ENCODE measurements at regions of chr4 and their contacts with region 1.

Region 1: DNA sequence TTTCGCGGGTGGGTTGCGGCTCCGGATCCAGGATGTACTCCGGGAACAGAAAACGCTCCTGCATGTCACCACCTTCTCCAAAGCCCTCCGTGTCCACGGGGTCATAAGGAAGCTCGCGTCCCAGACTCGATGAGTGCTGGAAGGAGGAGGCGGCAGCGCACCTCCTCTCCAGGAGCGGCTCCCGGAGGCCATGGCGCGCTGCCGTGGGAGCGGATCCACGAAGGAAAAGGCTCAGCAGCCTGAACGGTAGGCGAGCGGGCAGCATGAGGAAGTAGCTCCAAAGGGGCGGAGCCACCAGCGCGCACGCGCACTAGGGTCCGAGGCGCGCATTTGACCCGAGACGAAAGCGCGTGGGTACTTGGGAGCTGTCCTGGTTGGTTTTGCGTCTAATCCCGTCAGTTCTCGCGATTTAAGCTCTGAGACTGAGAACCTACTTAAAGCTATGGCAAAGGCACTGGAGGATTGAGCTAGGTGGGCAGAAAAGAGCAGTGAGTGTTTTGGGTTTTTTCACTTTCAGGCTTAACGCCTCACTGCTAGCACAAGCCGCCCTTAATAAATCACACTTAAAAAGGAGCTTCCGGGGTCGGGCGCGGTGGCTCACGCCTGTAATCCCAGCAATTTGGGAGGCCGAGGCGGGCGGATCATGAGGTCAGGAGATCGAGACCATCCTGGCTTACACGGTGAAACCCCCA is at the start of gene NOA1:
- DNase-seq: peak; percentile 95 to 99 (median 97)
- ATAC-seq: peak; percentile 79
- H3K4me3 ChIP-seq: peak within 1 kb of the TSS; percentile 94 to 100
- H3K4me3 Mint-ChIP-seq: peak within 1 kb of the TSS; percentile 93
- H3K27ac ChIP-seq: peak within 1 kb of the TSS; percentile 78 to 84
- H3K27ac Mint-ChIP-seq: peak within 1 kb of the TSS; percentile 94
- H3K4me1 ChIP-seq: peaks cover 45% of the 10 kb centered on the region
- H3K4me1 Mint-ChIP-seq: peaks cover 56% of the 10 kb centered on the region
- H3K27me3 ChIP-seq: no peaks in the 10 kb centered on the region
- H3K27me3 Mint-ChIP-seq: no peaks in the 10 kb centered on the region
- CTCF ChIP-seq: no peak
- total RNA-seq, gene NOA1: 16.5 to 17.2 TPM

Region 2: DNA sequence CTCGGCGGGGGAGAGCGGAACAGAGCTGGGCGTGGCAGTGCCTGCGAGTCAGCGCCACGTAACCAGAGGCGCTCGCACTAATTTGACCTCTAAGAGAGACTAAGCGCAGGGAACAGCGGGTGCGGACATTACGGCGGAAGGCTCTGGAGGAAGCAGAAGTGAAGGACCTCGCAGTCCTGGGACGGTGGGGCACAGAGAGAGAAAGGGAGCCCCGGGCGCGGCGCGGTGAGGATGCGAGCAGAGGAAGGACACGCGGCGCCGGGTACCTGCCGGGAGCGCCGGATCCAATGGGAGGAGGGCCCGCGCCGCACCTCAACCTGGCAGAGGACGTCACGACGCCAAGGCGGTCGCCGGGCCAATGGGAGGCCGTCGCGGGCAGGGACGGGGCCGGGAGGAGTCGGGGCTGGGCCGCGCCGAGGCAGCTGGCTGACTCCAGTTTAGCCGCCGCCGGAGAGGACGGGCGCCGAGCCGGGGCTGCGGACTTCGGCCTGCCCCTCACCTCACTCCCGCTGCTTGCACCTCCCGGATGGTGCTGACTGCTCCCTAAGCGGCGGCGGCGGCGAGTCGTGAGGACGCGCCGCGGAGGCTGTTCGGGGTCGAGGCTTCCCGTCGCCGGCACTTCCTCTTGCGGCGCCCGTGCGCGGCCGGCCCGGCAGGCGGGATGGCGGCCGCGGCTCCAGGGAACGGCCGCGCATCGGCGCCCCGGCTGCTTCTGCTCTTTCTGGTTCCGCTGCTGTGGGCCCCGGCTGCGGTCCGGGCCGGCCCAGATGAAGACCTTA is 1581.7 kb before region 1 on chr4 and contains the start of gene TMEM165:
- CTCF ChIA-PET with region 1: no interaction called
- POLR2A ChIA-PET with region 1: no interaction called
- intact Hi-C with region 1: loop called (anchors 2 to 10 kb)
- DNase-seq: peak; percentile 72 to 93 (median 86)
- ATAC-seq: peak; percentile 94
- H3K4me3 ChIP-seq: peak within 1 kb of the TSS; percentile 68 to 74
- H3K4me3 Mint-ChIP-seq: peak within 1 kb of the TSS; percentile 97
- H3K27ac ChIP-seq: peak within 1 kb of the TSS; percentile 83 to 93
- H3K27ac Mint-ChIP-seq: peak within 1 kb of the TSS; percentile 98
- H3K4me1 ChIP-seq: peaks cover 36% of the 10 kb centered on the region
- H3K4me1 Mint-ChIP-seq: peaks cover 38% of the 10 kb centered on the region
- H3K27me3 ChIP-seq: no peaks in the 10 kb centered on the region
- H3K27me3 Mint-ChIP-seq: no peaks in the 10 kb centered on the region
- CTCF ChIP-seq: peak; percentile 0
- total RNA-seq, gene TMEM165: 31.0 to 31.5 TPM

Region 3: DNA sequence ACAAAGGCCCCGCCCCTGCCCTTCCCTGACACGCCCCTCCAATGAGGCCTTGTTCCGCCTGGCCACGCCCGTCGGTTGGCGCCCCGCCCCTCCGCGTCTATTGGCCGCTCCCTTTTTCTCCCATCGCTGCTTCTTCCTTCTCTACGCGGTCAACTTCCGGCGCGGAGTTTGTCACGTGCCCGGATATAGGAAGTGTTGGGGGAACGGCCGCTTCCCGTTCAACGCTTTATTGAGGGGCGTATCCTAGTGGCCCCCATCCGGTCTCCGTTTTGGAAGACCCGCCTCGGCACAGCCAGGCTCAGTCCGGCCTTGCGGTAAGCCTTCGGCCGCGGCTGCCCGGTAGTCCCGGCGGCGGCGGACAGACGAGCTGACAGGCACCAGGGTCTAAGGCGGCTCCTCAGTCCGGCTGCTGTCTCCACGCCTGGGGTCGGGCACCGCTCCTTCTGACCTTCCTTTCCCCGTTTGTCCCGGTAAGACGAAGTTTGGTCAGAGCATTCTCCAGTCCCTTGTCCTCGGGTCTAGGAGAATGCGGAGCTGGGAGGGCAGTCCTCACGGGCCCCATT is 1123.9 kb before region 1 on chr4 and contains the start of gene EXOC1:
- CTCF ChIA-PET with region 1: no interaction called
- POLR2A ChIA-PET with region 1: no interaction called
- intact Hi-C with region 1: loop called in 1 of 2 experiments (anchors 5 kb)
- DNase-seq: peak; percentile 90 to 98 (median 97)
- ATAC-seq: peak; percentile 96
- H3K4me3 ChIP-seq: peak within 1 kb of the TSS; percentile 96
- H3K4me3 Mint-ChIP-seq: peak within 1 kb of the TSS; percentile 36
- H3K27ac ChIP-seq: peak within 1 kb of the TSS; percentile 70 to 86
- H3K27ac Mint-ChIP-seq: peak within 1 kb of the TSS; percentile 64
- H3K4me1 ChIP-seq: peaks cover 40% of the 10 kb centered on the region
- H3K4me1 Mint-ChIP-seq: peaks cover 38% of the 10 kb centered on the region
- H3K27me3 ChIP-seq: no peaks in the 10 kb centered on the region
- H3K27me3 Mint-ChIP-seq: no peaks in the 10 kb centered on the region
- CTCF ChIP-seq: no peak
- total RNA-seq, gene EXOC1: 12.1 to 14.5 TPM

Region 4: DNA sequence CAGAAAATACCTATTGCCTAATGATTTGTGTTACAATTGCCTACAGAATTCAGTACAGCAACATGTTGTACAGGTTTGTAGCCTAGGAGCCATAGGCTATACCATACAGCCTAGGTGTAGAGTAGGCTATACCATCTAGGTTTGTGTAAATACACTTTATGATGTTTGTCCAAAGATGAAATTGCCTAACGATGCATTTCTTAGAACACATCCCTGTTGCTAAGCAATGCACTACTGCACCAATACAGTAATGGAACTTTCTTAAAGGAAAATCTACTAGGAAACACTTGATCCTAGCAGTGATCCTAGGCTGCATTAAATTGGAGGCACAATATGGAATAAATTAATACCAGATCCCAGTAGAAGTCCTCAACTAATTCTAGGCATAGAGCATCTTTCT is 18.4 kb before region 1 on chr4:
- CTCF ChIA-PET with region 1: interaction called, 4 read pairs
- POLR2A ChIA-PET with region 1: interaction called, 13 read pairs
- intact Hi-C with region 1: no loop called
- DNase-seq: no peak
- ATAC-seq: no peak
- H3K4me3 ChIP-seq: no peak overlapping the region
- H3K4me3 Mint-ChIP-seq: no peak overlapping the region
- H3K27ac ChIP-seq: no peak overlapping the region
- H3K27ac Mint-ChIP-seq: no peak overlapping the region
- H3K4me1 ChIP-seq: no peaks in the 10 kb centered on the region
- H3K4me1 Mint-ChIP-seq: no peaks in the 10 kb centered on the region
- H3K27me3 ChIP-seq: no peaks in the 10 kb centered on the region
- H3K27me3 Mint-ChIP-seq: no peaks in the 10 kb centered on the region
- CTCF ChIP-seq: no peak

Region 5: DNA sequence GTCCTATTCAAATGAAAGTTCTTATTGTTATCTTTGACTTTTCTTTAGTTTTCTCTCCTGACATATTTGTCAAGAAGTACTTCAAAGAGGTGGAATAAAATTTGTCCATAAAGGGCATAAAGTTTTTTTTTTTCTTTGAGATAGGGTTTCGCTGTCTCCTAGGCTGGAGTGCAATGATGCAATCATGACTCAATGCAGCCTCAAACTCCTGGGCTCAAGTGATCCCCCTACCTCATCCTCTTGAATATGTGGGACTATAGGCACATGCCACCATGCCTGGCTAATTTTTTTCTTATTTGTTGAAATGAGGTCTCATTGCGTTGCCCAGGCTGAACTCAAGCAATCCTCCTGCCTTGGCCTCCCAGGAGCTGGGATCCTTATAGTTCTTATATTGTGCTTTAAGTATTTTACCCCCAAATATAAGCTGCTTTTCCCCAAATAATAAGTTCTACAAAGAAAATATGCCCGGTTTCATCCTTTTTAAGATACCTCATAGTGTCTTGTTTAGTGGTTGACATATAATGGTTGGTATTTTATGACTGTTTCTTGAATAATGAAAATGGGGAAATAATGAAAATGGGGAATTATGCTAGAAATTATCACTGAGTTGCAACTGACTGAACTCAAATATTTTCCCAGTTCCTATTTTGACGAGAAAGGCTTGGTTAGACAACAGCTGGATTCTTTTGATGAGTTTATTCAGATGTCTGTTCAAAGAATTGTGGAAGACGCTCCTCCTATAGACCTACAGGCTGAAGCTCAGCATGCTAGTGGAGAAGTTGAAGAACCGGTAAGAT is 12.8 kb after region 1 on chr4:
- CTCF ChIA-PET with region 1: interaction called, 5 read pairs
- POLR2A ChIA-PET with region 1: interaction called, 18 read pairs
- intact Hi-C with region 1: no loop called
- DNase-seq: no peak
- ATAC-seq: no peak
- H3K4me3 ChIP-seq: no peak overlapping the region
- H3K4me3 Mint-ChIP-seq: no peak overlapping the region
- H3K27ac ChIP-seq: no peak overlapping the region
- H3K27ac Mint-ChIP-seq: peak overlapping the region; percentile 63
- H3K4me1 ChIP-seq: peaks cover 4% of the 10 kb centered on the region
- H3K4me1 Mint-ChIP-seq: peaks cover 51% of the 10 kb centered on the region
- H3K27me3 ChIP-seq: no peaks in the 10 kb centered on the region
- H3K27me3 Mint-ChIP-seq: no peaks in the 10 kb centered on the region
- CTCF ChIP-seq: no peak

Region 6: DNA sequence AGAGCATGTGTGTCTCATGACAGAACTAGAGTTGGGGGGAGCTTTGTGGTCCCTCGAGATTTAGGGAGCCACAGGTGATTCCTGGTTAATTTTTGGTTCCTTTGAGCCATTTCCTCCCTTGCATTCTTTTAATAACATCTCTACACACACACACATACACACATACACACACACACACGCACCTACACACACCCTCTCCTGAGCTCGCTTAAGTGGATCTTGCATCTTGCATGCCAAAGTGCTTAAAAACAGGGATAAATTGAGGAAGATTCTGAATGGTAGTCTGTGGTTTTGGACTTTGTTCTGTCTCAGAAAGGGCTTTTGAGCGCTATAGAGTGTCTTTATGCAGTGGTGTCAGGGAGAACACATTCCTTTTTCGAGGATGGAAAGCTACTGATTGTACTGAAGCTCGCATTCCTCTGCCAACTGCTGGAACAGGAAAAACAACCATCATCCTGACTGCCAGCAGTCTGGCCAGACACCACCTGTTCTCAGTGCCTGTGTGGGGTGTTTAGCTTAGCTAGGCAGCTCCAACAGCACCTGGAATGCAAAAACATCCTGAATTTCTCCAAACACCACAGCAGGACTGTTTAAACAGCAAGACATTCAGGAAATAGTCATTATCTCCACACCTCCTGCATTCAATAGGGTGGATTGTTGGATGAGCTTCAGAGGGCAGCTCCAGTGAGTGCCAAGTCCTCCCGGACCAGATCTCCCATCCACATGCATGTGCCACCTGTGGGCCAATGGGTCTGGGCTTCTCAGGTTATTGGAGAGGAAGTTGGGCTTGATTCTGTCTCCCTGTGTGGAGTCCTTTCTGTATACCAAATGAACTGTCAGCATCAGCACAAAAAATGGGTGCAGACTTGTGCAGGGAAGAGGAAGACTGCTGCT is 154.6 kb after region 1 on chr4:
- CTCF ChIA-PET with region 1: no interaction called
- POLR2A ChIA-PET with region 1: no interaction called
- intact Hi-C with region 1: no loop called
- DNase-seq: no peak
- ATAC-seq: no peak
- H3K4me3 ChIP-seq: no peak overlapping the region
- H3K4me3 Mint-ChIP-seq: no peak overlapping the region
- H3K27ac ChIP-seq: no peak overlapping the region
- H3K27ac Mint-ChIP-seq: no peak overlapping the region
- H3K4me1 ChIP-seq: no peaks in the 10 kb centered on the region
- H3K4me1 Mint-ChIP-seq: no peaks in the 10 kb centered on the region
- H3K27me3 ChIP-seq: no peaks in the 10 kb centered on the region
- H3K27me3 Mint-ChIP-seq: peaks cover 12% of the 10 kb centered on the region
- CTCF ChIP-seq: no peak

Measured in CD8-positive, alpha-beta T cell (primary cell).